ENCODE measurements at regions of chr2 and their contacts with region 1.

Region 1: DNA sequence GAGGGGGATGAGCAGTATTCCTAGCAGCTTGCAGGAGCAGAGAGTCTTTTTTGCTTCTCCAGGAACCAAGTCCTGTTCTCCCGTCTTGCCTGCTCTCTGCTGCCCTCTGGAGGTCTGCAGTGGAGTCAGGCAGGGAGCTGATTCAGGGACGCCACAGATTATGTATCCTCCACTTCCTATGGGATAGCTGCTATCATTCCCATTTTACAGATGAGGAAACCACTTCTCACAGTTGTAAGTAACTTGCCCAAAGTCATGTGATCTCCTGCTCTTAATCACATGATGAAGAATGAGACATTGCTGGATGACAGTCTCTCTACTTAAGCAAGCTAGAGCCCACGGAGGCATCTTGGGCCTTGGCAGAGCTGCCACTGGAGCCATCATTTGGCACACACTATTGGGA is 8.3 kb downstream of the SLC4A5 start:
- DNase-seq: peak; percentile 85
- ATAC-seq: peak; percentile 93
- H3K4me3 Mint-ChIP-seq: no peak overlapping the region
- H3K27ac Mint-ChIP-seq: no peak overlapping the region
- H3K4me1 Mint-ChIP-seq: no peaks in the 10 kb centered on the region
- H3K27me3 Mint-ChIP-seq: peaks cover 10% of the 10 kb centered on the region
- CTCF ChIP-seq: peak; percentile 90

Region 2: DNA sequence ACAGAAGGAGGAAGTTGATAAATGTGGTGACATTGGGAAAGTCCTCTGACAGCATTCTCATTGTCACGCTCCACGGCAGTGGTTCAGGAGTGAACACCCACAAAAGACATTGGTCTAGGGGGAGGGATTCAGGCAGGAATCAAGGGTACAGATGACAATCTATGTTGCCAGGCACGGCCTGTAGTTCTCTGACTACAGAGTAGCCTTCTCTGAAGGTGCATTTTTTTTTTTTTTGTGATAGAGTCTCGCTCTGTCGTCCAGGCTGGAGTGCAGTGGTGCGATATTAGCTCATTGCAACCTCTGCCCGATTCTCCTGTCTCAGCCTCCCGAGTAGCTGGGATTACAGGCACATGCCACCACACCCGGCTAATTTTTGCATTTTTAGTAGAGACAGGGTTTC is 148.9 kb before region 1 on chr2:
- CTCF ChIA-PET with region 1: no interaction called
- POLR2A ChIA-PET with region 1: no interaction called
- DNase-seq: no peak
- ATAC-seq: no peak
- H3K4me3 Mint-ChIP-seq: no peak overlapping the region
- H3K27ac Mint-ChIP-seq: no peak overlapping the region
- H3K4me1 Mint-ChIP-seq: peaks cover 19% of the 10 kb centered on the region
- H3K27me3 Mint-ChIP-seq: no peaks in the 10 kb centered on the region; the same call in none of the 2 replicates
- CTCF ChIP-seq: no peak

Region 3: DNA sequence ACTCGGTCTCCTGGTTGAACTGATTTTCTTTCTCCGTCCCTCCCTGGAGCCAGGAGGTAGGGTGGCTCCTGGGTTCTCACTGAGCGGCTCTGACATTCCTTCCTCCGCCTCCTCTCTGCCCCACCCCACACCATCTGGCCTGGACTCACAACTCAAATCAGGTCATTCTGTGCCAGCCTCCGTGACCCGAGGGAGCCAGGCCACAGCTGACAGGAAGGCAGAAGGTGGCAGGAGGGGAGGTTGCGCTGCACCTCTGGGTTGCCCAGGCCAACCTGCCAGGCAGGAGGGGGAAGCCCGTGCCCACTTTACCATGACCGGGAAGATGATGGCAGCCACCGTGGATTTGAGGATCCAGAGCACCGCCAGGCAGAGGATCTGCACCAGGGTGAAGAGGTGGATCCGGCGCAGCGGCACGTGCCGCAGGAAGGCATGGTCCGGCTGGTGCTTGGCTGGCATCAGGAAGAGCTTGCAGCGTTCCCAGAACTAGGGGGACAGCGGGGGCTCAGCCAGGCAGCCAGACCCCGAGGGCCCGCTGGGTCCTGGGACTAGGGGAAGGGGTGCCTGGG is 108.2 kb before region 1 on chr2:
- CTCF ChIA-PET with region 1: interaction called, 12 read pairs
- POLR2A ChIA-PET with region 1: no interaction called
- DNase-seq: no peak
- ATAC-seq: no peak
- H3K4me3 Mint-ChIP-seq: no peak overlapping the region
- H3K27ac Mint-ChIP-seq: no peak overlapping the region
- H3K4me1 Mint-ChIP-seq: peaks cover 13% of the 10 kb centered on the region
- H3K27me3 Mint-ChIP-seq: peaks cover 4% of the 10 kb centered on the region; the same call in 1 of the 2 replicates
- CTCF ChIP-seq: no peak

Region 4: GRCh38 chr2:74278176-74278575 is 56.8 kb before region 1 on chr2:
- CTCF ChIA-PET with region 1: interaction called, 26 read pairs
- POLR2A ChIA-PET with region 1: no interaction called
- DNase-seq: no peak
- ATAC-seq: no peak
- H3K4me3 Mint-ChIP-seq: no peak overlapping the region
- H3K27ac Mint-ChIP-seq: no peak overlapping the region
- H3K4me1 Mint-ChIP-seq: no peaks in the 10 kb centered on the region
- H3K27me3 Mint-ChIP-seq: peaks cover 37% of the 10 kb centered on the region
- CTCF ChIP-seq: no peak

Region 5: DNA sequence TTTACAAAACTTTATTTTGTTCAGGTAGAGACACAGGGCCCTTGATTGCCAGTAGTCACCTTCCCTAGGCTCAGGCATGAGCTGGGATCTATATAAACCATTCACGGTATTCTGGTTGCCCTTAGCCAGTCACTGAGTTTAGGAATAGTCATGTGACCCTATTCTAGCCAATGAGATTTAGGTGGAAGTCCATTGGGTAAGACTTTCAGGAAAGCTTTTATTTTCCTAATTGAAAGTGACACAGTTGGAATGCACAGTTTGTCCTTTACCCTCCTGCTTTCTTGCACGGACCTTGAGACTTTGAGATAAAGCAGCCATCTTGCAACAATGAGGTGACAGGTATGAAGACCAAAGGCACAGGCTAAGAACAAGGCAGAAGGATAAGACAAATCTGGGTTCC is 13.2 kb before region 1 on chr2:
- CTCF ChIA-PET with region 1: interaction called, 63 read pairs
- POLR2A ChIA-PET with region 1: no interaction called
- DNase-seq: no peak
- ATAC-seq: peak; percentile 69
- H3K4me3 Mint-ChIP-seq: no peak overlapping the region
- H3K27ac Mint-ChIP-seq: no peak overlapping the region
- H3K4me1 Mint-ChIP-seq: peaks cover 6% of the 10 kb centered on the region
- H3K27me3 Mint-ChIP-seq: no peaks in the 10 kb centered on the region; the same call in 1 of the 2 replicates
- CTCF ChIP-seq: no peak

Region 6: DNA sequence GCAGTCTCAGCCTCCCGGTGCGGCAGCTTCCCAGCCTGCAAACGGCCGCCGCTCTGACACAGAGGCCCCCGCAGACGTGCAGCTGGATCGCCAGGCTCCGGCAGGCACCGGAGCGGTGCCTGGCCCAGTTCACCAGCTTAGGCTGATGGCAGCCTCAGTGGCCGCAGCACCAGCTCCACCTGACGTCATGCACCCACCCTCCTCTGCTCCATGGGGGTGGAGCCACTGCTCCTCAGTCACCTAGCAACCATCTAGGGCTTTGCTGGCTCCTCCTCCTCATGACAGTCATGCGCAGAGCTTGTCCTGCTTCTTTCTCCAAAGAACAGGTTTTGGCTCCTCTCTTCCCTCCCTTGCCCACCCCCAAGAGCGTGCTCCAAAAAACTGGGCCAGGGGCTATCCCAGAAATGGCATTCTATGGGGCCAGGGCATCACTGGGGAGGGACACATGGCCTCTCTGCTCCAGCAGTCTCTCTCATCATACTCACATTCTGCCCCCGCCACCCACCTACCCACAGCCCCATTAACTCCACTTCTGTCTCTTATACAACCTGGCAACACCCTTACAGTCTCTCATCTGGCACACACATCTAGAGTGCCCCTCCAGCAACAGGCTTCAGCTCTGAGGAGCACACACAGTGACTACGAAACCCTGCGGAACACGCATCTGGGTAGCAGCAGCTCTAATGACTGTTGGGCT is 39.7 kb after region 1 on chr2:
- CTCF ChIA-PET with region 1: interaction called, 18 read pairs
- POLR2A ChIA-PET with region 1: interaction called, 4 read pairs
- DNase-seq: peak; percentile 87
- ATAC-seq: peak; percentile 97
- H3K4me3 Mint-ChIP-seq: peak overlapping the region; percentile 83
- H3K27ac Mint-ChIP-seq: peak overlapping the region; percentile 98
- H3K4me1 Mint-ChIP-seq: peaks cover 36% of the 10 kb centered on the region
- H3K27me3 Mint-ChIP-seq: no peaks in the 10 kb centered on the region
- CTCF ChIP-seq: no peak

Region 7: DNA sequence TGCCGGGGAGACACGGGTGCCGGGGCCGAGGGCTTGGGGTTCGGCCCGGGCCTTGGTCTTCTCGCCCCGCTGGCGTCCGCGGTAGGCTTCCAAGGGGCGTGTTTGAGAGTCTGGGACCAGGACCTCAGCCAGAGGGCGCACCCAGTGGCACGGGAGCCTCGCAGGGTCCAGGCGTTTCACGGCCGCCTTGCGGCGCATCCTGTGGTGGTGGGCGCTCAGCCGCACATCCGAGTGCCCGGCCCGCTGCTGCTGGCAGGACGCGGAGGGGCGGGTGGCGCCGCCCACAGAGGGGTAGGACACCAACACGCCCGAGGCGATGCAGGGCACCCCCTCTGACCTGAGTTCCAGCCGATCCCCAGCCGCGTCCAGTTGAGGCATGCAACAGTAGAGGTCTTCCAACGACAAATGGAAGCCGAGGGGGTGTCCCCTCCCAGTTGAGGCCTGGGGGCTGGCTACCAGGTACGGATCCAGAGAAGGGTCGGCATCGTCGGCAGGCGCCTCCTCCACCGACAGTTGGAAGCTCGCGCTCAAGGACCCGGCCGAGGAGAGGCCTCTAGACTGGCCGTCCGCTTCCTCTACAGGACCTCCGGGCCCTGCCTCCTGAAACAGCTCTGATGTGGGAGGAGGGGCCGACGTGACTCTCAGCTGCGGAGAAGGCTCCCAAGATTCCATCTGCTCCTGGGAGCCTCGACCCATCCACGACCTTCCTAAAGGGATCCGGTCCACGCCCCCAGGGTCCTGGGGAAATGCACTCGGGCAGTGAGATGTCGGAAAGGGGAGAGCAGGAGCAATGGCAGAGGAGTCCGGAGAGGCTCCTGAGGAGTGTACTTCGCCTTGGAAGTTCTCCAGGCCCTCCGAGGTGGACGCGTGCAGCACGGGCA is 80.2 kb after region 1 on chr2:
- CTCF ChIA-PET with region 1: interaction called, 14 read pairs
- POLR2A ChIA-PET with region 1: no interaction called
- DNase-seq: peak; percentile 62
- ATAC-seq: peak; percentile 64
- H3K4me3 Mint-ChIP-seq: peak overlapping the region; percentile 63
- H3K27ac Mint-ChIP-seq: no peak overlapping the region; the same call in 1 of the 2 replicates
- H3K4me1 Mint-ChIP-seq: peaks cover 13% of the 10 kb centered on the region
- H3K27me3 Mint-ChIP-seq: peaks cover 70% of the 10 kb centered on the region
- CTCF ChIP-seq: no peak